ENCODE measurements at regions of chr1 and their contacts with region 1.

Region 1: GRCh38 chr1:178629252-178630154 is 95.5 kb upstream of the RALGPS2 start:
- DNase-seq: peak; percentile 83
- ATAC-seq: peak; percentile 80
- H3K4me3 ChIP-seq: no peak overlapping the region
- H3K27ac ChIP-seq: peak overlapping the region; percentile 88
- H3K4me1 ChIP-seq: peaks cover 34% of the 10 kb centered on the region
- H3K27me3 ChIP-seq: no peaks in the 10 kb centered on the region
- CTCF ChIP-seq: peak; percentile 11; the same call in 1 of the 2 replicates
- POLR2A ChIP-seq: no peak
- RAD21 ChIP-seq: no peak

Region 2: GRCh38 chr1:178725603-178726517 is 96.4 kb after region 1 on chr1:
- CTCF ChIA-PET with region 1: no interaction called
- POLR2A ChIA-PET with region 1: interaction called, 4 read pairs
- dilution Hi-C with region 1: no loop called
- in situ Hi-C with region 1: no loop called
- intact Hi-C with region 1: loop called (anchors 5 kb)
- DNase-seq: peak; percentile 84
- ATAC-seq: peak; percentile 61
- H3K4me3 ChIP-seq: peak overlapping the region; percentile 91
- H3K27ac ChIP-seq: peak overlapping the region; percentile 76
- H3K4me1 ChIP-seq: no peaks in the 10 kb centered on the region; the same call in 1 of the 2 replicates
- H3K27me3 ChIP-seq: no peaks in the 10 kb centered on the region
- CTCF ChIP-seq: no peak
- POLR2A ChIP-seq: no peak
- RAD21 ChIP-seq: no peak

Region 3: GRCh38 chr1:178749581-178750166 is 120.2 kb after region 1 on chr1:
- CTCF ChIA-PET with region 1: no interaction called
- POLR2A ChIA-PET with region 1: no interaction called
- dilution Hi-C with region 1: no loop called
- in situ Hi-C with region 1: no loop called
- intact Hi-C with region 1: no loop called
- DNase-seq: no peak
- ATAC-seq: no peak
- H3K4me3 ChIP-seq: no peak overlapping the region
- H3K27ac ChIP-seq: no peak overlapping the region
- H3K4me1 ChIP-seq: peaks cover 8% of the 10 kb centered on the region
- H3K27me3 ChIP-seq: no peaks in the 10 kb centered on the region
- CTCF ChIP-seq: no peak
- POLR2A ChIP-seq: no peak
- RAD21 ChIP-seq: no peak

Measured in IMR-90 (cell line).